Activated CD8-positive, alpha-beta T cell treated with anti-CD3 and anti-CD28 coated beads for 36 hours (primary cell): ENCODE measurements at regions of chr11 and their contacts with region 1.

Region 1: GRCh38 chr11:122843281-122844141 is 5.2 kb downstream of the CRTAM start:
- DNase-seq: peak; percentile 86
- ATAC-seq: peak; percentile 67
- H3K4me3 Mint-ChIP-seq: peak overlapping the region; percentile 76
- H3K27ac Mint-ChIP-seq: peak overlapping the region; percentile 97
- H3K4me1 Mint-ChIP-seq: peaks cover 69% of the 10 kb centered on the region
- H3K27me3 Mint-ChIP-seq: no peaks in the 10 kb centered on the region
- CTCF ChIP-seq: no peak

Region 2: DNA sequence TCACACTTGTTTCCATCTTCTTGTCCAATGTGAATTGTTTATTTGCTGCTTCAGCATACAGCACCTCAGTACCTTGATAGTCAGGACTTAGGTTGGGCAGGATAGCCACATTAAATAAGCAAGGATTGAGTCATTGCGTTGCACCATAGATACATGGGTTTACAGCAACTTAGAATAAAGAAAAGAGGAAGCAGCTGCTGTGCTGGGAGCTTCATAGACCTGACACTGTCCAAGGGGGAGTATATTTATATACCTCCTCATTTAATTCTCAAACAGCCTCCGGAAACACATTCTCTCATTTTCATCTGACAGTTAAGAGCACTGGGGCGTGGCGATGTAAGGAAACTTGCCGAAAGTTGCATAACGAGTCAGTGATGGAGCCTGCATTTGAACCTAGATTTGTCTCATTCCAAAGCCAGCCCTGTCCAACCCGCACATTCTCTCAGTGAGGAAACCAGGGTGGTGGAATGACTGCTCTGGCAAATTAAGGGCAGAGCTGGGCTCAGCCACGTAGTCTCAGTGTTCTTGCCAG is 145.8 kb before region 1 on chr11:
- CTCF ChIA-PET with region 1: no interaction called
- POLR2A ChIA-PET with region 1: no interaction called
- intact Hi-C with region 1: no loop called
- DNase-seq: peak; percentile 71
- ATAC-seq: peak; percentile 77
- H3K4me3 Mint-ChIP-seq: peak overlapping the region; percentile 46
- H3K27ac Mint-ChIP-seq: peak overlapping the region; percentile 82
- H3K4me1 Mint-ChIP-seq: peaks cover 87% of the 10 kb centered on the region
- H3K27me3 Mint-ChIP-seq: no peaks in the 10 kb centered on the region
- CTCF ChIP-seq: no peak

Region 3: GRCh38 chr11:123454060-123454651 is 610.6 kb after region 1 on chr11:
- CTCF ChIA-PET with region 1: no interaction called
- POLR2A ChIA-PET with region 1: no interaction called
- intact Hi-C with region 1: loop called (anchors 10 kb)
- DNase-seq: peak; percentile 87
- ATAC-seq: peak; percentile 82
- H3K4me3 Mint-ChIP-seq: peak overlapping the region; percentile 43
- H3K27ac Mint-ChIP-seq: peak overlapping the region; percentile 88
- H3K4me1 Mint-ChIP-seq: peaks cover 57% of the 10 kb centered on the region
- H3K27me3 Mint-ChIP-seq: no peaks in the 10 kb centered on the region
- CTCF ChIP-seq: no peak